T-cell (primary cell): ENCODE measurements at regions of chr14 and their contacts with region 1.

Region 1: DNA sequence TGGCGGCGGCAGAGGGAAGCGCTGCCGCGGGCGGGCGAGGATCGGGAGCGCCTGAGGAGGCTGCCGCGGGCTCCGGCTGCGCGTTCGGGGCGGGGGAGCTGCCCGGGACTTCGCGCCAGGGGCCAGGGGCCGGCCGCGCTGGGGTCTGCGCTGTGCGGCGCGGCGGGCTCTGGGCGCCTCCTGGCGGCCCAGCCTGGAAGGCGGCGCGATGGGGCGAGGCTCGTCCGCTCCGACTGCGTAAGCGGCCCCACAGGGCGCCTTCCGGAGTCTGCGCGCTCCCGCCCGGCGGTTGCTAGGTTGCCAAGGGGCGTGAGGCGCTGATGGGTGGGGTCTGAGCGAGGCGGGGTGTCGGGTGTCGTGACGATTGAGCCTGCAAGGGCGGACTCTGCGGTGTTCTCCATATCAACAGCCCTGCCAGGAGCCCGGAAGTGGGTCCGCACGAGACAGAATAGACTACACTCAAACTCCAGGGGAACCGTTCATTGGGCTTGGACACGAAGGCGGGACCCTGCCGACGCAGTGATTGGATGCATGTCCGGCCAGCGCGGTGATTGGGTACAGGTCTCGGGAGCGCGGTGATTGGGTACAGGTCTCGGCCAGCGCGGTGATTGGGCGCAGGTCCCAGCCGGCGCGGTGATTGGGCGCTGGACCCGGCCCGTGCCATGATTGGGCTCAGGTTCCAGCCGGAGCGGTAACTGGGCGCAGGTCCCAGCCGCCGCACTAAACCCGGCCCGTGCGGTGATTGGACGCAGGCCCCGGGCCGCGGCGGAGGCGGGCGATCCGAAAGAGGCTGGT is at the start of gene TEDC1:
- DNase-seq: peak; percentile 94 to 100 (median 99)
- ATAC-seq: peak; percentile 72 to 74 (median 72)
- H3K4me3 ChIP-seq: peak within 1 kb of the TSS; percentile 58 to 94
- H3K4me3 Mint-ChIP-seq: peak within 1 kb of the TSS; percentile 79 to 87 (median 84)
- H3K27ac ChIP-seq: peak within 1 kb of the TSS; percentile 100
- H3K27ac Mint-ChIP-seq: peak within 1 kb of the TSS; percentile 93 to 98
- H3K4me1 ChIP-seq: peaks cover 10 to 53% of the 10 kb centered on the region in 2 experiments
- H3K4me1 Mint-ChIP-seq: peaks cover 23 to 29% (median 25%) of the 10 kb centered on the region in 3 donors
- H3K27me3 ChIP-seq: no peaks in the 10 kb centered on the region
- H3K27me3 Mint-ChIP-seq: no peaks in the 10 kb centered on the region
- total RNA-seq, gene TEDC1: 32.8 to 186 (median 37.5) TPM

Region 2: GRCh38 chr14:104940526-104941150 is 550.1 kb before region 1 on chr14:
- CTCF ChIA-PET with region 1: no interaction called
- POLR2A ChIA-PET with region 1: no interaction called
- DNase-seq: no peak
- ATAC-seq: no peak
- H3K4me3 ChIP-seq: no peak overlapping the region
- H3K4me3 Mint-ChIP-seq: no peak overlapping the region
- H3K27ac ChIP-seq: no peak overlapping the region
- H3K27ac Mint-ChIP-seq: no peak overlapping the region
- H3K4me1 ChIP-seq: no peaks in the 10 kb centered on the region
- H3K4me1 Mint-ChIP-seq: no peaks in the 10 kb centered on the region
- H3K27me3 ChIP-seq: peaks cover 0 to 42% of the 10 kb centered on the region in 2 experiments
- H3K27me3 Mint-ChIP-seq: peaks cover 3 to 4% of the 10 kb centered on the region in 2 donors

Region 3: DNA sequence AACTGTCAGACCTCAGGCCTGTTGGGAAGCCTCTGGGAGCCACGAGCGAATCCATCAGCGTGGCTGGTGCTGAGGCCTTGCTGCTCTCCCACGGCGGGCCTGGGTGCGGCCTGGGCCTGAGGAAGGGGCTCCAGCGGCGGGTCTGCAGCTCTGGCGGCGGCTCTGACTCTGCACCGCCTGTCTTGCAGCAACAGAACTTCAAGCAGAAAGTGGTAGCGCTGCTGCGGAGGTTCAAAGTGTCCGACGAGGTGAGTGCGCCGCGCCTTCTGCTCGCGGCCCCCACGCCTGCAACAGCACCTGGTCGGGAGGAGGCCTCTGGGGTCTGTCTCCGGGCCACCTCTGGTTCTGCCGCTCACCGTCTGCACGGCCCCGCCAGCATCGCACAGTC is 121.1 kb before region 1 on chr14:
- CTCF ChIA-PET with region 1: interaction called, 5 to 33 read pairs
- POLR2A ChIA-PET with region 1: interaction called in 1 of 2 experiments, 4 read pairs
- DNase-seq: no peak
- ATAC-seq: no peak
- H3K4me3 ChIP-seq: no peak overlapping the region
- H3K4me3 Mint-ChIP-seq: no peak overlapping the region
- H3K27ac ChIP-seq: no peak overlapping the region
- H3K27ac Mint-ChIP-seq: no peak overlapping the region
- H3K4me1 ChIP-seq: peaks cover 0 to 17% of the 10 kb centered on the region in 2 experiments
- H3K4me1 Mint-ChIP-seq: peaks cover 4 to 7% (median 4%) of the 10 kb centered on the region in 3 donors
- H3K27me3 ChIP-seq: no peaks in the 10 kb centered on the region
- H3K27me3 Mint-ChIP-seq: no peaks in the 10 kb centered on the region

Region 4: GRCh38 chr14:105398044-105398725 is 92.6 kb before region 1 on chr14 and contains the start of gene TEX22:
- CTCF ChIA-PET with region 1: no interaction called
- POLR2A ChIA-PET with region 1: interaction called in 1 of 2 experiments, 11 read pairs
- DNase-seq: peak; percentile 51 to 92 (median 80)
- ATAC-seq: peak; percentile 87 to 91 (median 89)
- H3K4me3 ChIP-seq: peak within 1 kb of the TSS; percentile 71 to 74
- H3K4me3 Mint-ChIP-seq: peak within 1 kb of the TSS; percentile 74 to 81 (median 80)
- H3K27ac ChIP-seq: peak within 1 kb of the TSS; percentile 72
- H3K27ac Mint-ChIP-seq: peak within 1 kb of the TSS; percentile 82 to 89
- H3K4me1 ChIP-seq: peaks cover 8 to 25% of the 10 kb centered on the region in 2 experiments
- H3K4me1 Mint-ChIP-seq: peaks cover 19 to 26% (median 19%) of the 10 kb centered on the region in 3 donors
- H3K27me3 ChIP-seq: no peaks in the 10 kb centered on the region
- H3K27me3 Mint-ChIP-seq: no peaks in the 10 kb centered on the region
- total RNA-seq, gene TEX22: 0.93 to 9.0 (median 6.0) TPM

Region 5: DNA sequence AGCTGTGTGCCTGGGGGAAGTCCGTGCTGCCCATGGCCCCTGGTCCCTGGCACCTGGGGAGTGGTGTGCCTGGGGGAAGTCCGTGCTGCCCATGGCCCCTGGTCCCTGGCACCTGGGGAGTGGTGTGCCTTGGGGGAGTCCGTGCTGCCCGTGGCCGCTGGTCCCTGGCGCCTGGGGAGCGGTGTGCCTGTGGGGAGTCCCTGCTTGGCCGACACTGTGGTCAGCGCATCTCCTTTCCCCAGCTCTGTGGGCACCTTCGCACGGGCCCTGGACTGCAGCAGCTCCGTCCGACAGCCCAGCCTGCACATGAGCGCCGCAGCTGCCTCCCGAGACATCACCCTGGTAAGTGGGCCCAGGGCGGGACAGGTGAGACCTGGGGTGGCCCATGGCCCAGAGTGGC is 30.7 kb before region 1 on chr14:
- CTCF ChIA-PET with region 1: no interaction called
- POLR2A ChIA-PET with region 1: no interaction called
- DNase-seq: no peak
- ATAC-seq: no peak
- H3K4me3 ChIP-seq: no peak overlapping the region
- H3K4me3 Mint-ChIP-seq: no peak overlapping the region
- H3K27ac ChIP-seq: no peak overlapping the region
- H3K27ac Mint-ChIP-seq: no peak overlapping the region
- H3K4me1 ChIP-seq: no peaks in the 10 kb centered on the region
- H3K4me1 Mint-ChIP-seq: no peaks in the 10 kb centered on the region
- H3K27me3 ChIP-seq: no peaks in the 10 kb centered on the region
- H3K27me3 Mint-ChIP-seq: no peaks in the 10 kb centered on the region